Activated CD4-positive, alpha-beta T cell treated with anti-CD3 and anti-CD28 coated beads for 36 hours (primary cell): ENCODE measurements at regions of chr17 and their contacts with region 1.

Region 1: GRCh38 chr17:21043286-21044232 is 748 bp upstream of the USP22 start:
- DNase-seq: peak; percentile 99
- ATAC-seq: peak; percentile 88
- H3K4me3 Mint-ChIP-seq: peak overlapping the region; percentile 76
- H3K27ac Mint-ChIP-seq: peak overlapping the region; percentile 95
- H3K4me1 Mint-ChIP-seq: peaks cover 21% of the 10 kb centered on the region
- H3K27me3 Mint-ChIP-seq: no peaks in the 10 kb centered on the region

Region 2: DNA sequence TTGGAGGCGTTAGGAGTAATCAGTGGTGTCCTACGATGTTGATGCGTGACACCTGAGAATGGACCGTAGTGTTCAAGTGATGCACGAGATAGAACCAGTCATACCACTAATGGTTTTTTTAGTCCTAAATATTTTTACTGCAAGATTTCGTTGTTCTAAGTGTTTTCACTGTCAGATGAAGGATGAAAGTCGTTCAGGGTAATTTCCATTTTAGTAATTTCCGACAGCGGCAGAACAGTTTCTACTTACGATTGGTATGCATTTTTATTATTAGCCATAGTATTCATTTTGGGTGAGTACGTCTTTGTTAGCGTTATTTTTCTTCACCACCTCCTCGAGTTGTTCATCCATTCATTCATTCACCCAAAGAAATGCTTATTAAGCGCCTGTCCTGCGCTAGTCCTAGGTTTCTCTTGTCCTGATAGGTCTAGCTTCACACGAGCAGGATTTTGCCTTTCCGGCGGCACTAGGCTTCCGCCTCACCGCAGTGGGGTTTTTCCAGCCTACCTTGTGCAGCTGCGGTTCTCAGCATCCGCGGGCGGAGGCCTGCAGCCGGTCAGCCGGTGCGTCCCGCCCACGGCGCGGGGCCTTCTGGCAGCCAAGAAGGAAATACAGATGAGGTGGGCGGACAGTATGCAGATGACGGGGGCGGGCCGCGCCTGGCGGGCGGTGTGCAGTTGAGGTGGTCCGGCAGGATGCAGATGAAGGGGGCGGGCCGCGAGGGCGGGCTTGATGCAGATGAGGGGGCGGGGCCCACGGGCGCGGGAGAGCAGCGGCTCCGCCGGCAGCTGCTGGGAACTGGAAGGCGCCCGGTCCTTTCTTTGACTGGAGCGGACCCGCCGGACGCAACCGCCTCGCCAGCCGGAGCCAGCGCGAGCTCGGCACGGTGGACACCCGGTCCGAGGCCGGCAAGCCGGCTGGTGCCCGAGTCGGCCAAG is 888.0 kb before region 1 on chr17:
- CTCF ChIA-PET with region 1: no interaction called
- POLR2A ChIA-PET with region 1: no interaction called
- intact Hi-C with region 1: loop called in 1 of 2 experiments (anchors 1 kb)
- DNase-seq: peak; percentile 96
- ATAC-seq: peak; percentile 88
- H3K4me3 Mint-ChIP-seq: no peak overlapping the region
- H3K27ac Mint-ChIP-seq: no peak overlapping the region
- H3K4me1 Mint-ChIP-seq: peaks cover 4% of the 10 kb centered on the region
- H3K27me3 Mint-ChIP-seq: peaks cover 5% of the 10 kb centered on the region

Region 3: DNA sequence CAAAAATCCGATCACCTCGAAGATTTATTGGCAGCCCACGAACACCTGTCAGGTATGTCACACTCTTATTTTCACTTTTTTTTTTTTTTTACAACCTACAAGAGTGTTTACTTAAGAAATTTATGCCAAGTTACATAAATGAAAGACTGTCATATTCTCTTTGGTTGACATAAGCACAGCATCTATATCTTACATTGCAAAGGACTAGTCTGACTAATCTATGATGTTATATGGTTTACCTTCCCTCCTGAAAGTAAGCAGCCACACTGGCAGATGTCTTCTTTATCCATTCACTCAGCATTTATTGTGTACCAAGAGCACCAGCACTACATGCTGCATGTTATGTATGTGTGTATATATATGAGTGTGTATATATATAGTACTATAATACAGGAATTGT is 307.8 kb before region 1 on chr17:
- CTCF ChIA-PET with region 1: no interaction called
- POLR2A ChIA-PET with region 1: no interaction called
- intact Hi-C with region 1: no loop called
- DNase-seq: no peak
- ATAC-seq: no peak
- H3K4me3 Mint-ChIP-seq: no peak overlapping the region
- H3K27ac Mint-ChIP-seq: no peak overlapping the region
- H3K4me1 Mint-ChIP-seq: no peaks in the 10 kb centered on the region
- H3K27me3 Mint-ChIP-seq: peaks cover 5% of the 10 kb centered on the region

Region 4: GRCh38 chr17:21058098-21058893 is 14.7 kb after region 1 on chr17:
- CTCF ChIA-PET with region 1: interaction called, 10 read pairs
- POLR2A ChIA-PET with region 1: interaction called, 5 read pairs
- intact Hi-C with region 1: no loop called
- DNase-seq: no peak
- ATAC-seq: no peak
- H3K4me3 Mint-ChIP-seq: no peak overlapping the region
- H3K27ac Mint-ChIP-seq: no peak overlapping the region
- H3K4me1 Mint-ChIP-seq: no peaks in the 10 kb centered on the region
- H3K27me3 Mint-ChIP-seq: peaks cover 2% of the 10 kb centered on the region

Region 5: GRCh38 chr17:21072745-21073197 is 29.2 kb after region 1 on chr17:
- CTCF ChIA-PET with region 1: no interaction called
- POLR2A ChIA-PET with region 1: no interaction called
- intact Hi-C with region 1: no loop called
- DNase-seq: no peak
- ATAC-seq: no peak
- H3K4me3 Mint-ChIP-seq: no peak overlapping the region
- H3K27ac Mint-ChIP-seq: no peak overlapping the region
- H3K4me1 Mint-ChIP-seq: no peaks in the 10 kb centered on the region
- H3K27me3 Mint-ChIP-seq: no peaks in the 10 kb centered on the region

Region 6: GRCh38 chr17:21126645-21127510 is 83.3 kb after region 1 on chr17 and contains the start of gene DHRS7B:
- CTCF ChIA-PET with region 1: interaction called, 3 read pairs
- POLR2A ChIA-PET with region 1: interaction called, 3 read pairs
- intact Hi-C with region 1: loop called in 1 of 2 experiments (anchors 1 kb)
- DNase-seq: peak; percentile 98
- ATAC-seq: peak; percentile 96
- H3K4me3 Mint-ChIP-seq: peak within 1 kb of the TSS; percentile 91
- H3K27ac Mint-ChIP-seq: peak within 1 kb of the TSS; percentile 98
- H3K4me1 Mint-ChIP-seq: peaks cover 23% of the 10 kb centered on the region
- H3K27me3 Mint-ChIP-seq: no peaks in the 10 kb centered on the region
- total RNA-seq, gene DHRS7B: 12.8 to 15.0 TPM

Region 7: GRCh38 chr17:21457051-21458026 is 413.8 kb after region 1 on chr17:
- CTCF ChIA-PET with region 1: no interaction called
- POLR2A ChIA-PET with region 1: no interaction called
- intact Hi-C with region 1: loop called in 1 of 2 experiments (anchors 1 kb)
- DNase-seq: peak; percentile 96
- ATAC-seq: peak; percentile 92
- H3K4me3 Mint-ChIP-seq: no peak overlapping the region
- H3K27ac Mint-ChIP-seq: peak overlapping the region; percentile 67
- H3K4me1 Mint-ChIP-seq: peaks cover 21% of the 10 kb centered on the region
- H3K27me3 Mint-ChIP-seq: peaks cover 15% of the 10 kb centered on the region

Region 8: GRCh38 chr17:21551081-21551881 is 507.7 kb after region 1 on chr17:
- CTCF ChIA-PET with region 1: no interaction called
- POLR2A ChIA-PET with region 1: no interaction called
- intact Hi-C with region 1: loop called in 1 of 2 experiments (anchors 2 kb)
- DNase-seq: peak; percentile 91
- ATAC-seq: peak; percentile 84
- H3K4me3 Mint-ChIP-seq: peak overlapping the region; percentile 72
- H3K27ac Mint-ChIP-seq: peak overlapping the region; percentile 85
- H3K4me1 Mint-ChIP-seq: peaks cover 30% of the 10 kb centered on the region
- H3K27me3 Mint-ChIP-seq: peaks cover 4% of the 10 kb centered on the region